ENCODE measurements at regions of chr9 and their contacts with region 1.

Region 1: GRCh38 chr9:74556685-74557084 is 59.5 kb downstream of the RORB start:
- DNase-seq: no peak
- ATAC-seq: no peak
- H3K4me3 ChIP-seq: no peak overlapping the region
- H3K27ac ChIP-seq: no peak overlapping the region
- H3K4me1 ChIP-seq: peaks cover 0 to 4% (median 0%) of the 10 kb centered on the region in 12 donors
- H3K27me3 ChIP-seq: no peaks in the 10 kb centered on the region
- CTCF ChIP-seq: no peak
- POLR2A ChIP-seq: no peak

Region 2: DNA sequence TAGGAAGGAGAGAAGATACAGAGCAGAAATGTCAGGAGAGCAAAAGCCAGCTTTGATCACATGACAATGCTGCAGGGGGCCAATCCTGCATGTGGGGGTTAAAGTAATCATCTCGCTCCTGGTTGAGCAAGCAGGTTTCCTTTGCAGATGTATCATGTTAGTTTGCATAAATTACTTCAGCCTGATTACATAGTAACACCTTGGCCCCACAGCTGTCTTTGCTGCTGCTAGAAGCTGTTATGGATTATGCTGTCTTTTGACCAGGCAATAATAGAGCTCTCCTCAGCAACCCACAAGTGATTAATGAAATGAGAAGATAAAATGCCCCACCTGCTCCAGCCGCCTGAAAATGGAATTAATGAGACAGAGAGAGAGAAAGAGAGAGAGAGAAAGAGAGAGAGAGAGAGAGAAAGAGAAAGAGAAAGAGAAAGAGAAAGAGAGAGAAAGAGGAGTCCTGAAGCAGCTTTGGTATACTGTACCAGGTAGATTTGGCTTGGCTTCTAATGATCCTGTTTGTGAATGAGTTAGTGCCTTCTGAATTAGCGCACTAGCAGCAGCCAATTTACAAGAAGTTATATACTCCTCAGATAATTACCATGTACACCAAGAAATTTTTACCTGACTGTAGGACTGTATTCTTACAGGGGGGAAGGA is 233.9 kb before region 1 on chr9:
- intact Hi-C with region 1: loop called in 1 of 10 experiments (anchors 10 kb)
- DNase-seq: no peak
- ATAC-seq: no peak
- H3K4me3 ChIP-seq: no peak overlapping the region
- H3K27ac ChIP-seq: no peak overlapping the region
- H3K4me1 ChIP-seq: no peaks in the 10 kb centered on the region
- H3K27me3 ChIP-seq: no peaks in the 10 kb centered on the region
- CTCF ChIP-seq: no peak
- POLR2A ChIP-seq: no peak